ENCODE measurements at regions of chr15 and their contacts with region 1.

Region 1: GRCh38 chr15:39553947-39554693 is 26.8 kb upstream of the THBS1 start:
- DNase-seq: no peak
- ATAC-seq: no peak
- H3K4me3 Mint-ChIP-seq: no peak overlapping the region
- H3K27ac Mint-ChIP-seq: no peak overlapping the region
- H3K4me1 Mint-ChIP-seq: no peaks in the 10 kb centered on the region
- H3K27me3 Mint-ChIP-seq: peaks cover 6% of the 10 kb centered on the region

Region 2: GRCh38 chr15:39517122-39517855 is 36.8 kb before region 1 on chr15:
- CTCF ChIA-PET with region 1: no interaction called
- POLR2A ChIA-PET with region 1: no interaction called
- intact Hi-C with region 1: loop called in 1 of 2 experiments (anchors 5 kb)
- DNase-seq: no peak
- ATAC-seq: no peak
- H3K4me3 Mint-ChIP-seq: no peak overlapping the region
- H3K27ac Mint-ChIP-seq: no peak overlapping the region
- H3K4me1 Mint-ChIP-seq: no peaks in the 10 kb centered on the region
- H3K27me3 Mint-ChIP-seq: peaks cover 14% of the 10 kb centered on the region

Measured in activated CD4-positive, alpha-beta T cell treated with anti-CD3 and anti-CD28 coated beads for 36 hours (primary cell).